ENCODE measurements at regions of chr10 and their contacts with region 1.

Region 1: DNA sequence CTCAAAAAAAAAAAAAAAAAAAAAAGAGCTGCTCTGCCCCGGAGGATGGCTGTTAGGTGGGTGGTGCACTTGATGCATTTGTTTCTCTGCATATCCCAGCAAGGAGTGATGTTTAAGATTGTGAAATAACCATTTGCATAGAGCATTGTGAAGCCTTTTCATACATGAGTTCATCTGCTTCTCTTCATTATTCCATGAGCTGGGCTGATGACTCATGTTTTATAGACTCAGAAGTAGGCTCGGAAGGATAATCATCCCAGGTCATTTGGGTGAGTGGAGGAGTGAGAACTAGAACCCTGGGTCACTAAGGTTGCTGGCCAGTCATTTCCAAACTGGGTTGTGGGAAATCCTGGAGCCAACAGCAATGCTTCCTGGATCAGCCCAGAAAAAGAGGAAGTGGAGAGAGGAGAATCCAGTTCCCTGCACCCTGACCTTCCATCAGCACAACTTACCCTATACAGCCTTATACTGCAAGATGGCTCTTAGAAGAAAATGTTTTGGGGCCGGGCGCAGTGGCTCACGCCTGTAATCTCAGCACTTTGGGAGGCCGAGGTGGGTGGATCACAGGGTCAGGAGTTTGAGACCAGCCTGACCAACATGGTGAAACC is 45.3 kb downstream of the TACC2 start:
- DNase-seq: no peak

Region 2: GRCh38 chr10:121999318-121999717 is 34.9 kb before region 1 on chr10:
- intact Hi-C with region 1: loop called (anchors 5 kb)
- DNase-seq: no peak

Region 3: GRCh38 chr10:122112625-122113160 is 78.4 kb after region 1 on chr10:
- intact Hi-C with region 1: no loop called
- DNase-seq: peak; percentile 93